Activated CD4-positive, alpha-beta T cell treated with anti-CD3 and anti-CD28 coated beads for 36 hours (primary cell): ENCODE measurements at regions of chr17 and their contacts with region 1.

Region 1: DNA sequence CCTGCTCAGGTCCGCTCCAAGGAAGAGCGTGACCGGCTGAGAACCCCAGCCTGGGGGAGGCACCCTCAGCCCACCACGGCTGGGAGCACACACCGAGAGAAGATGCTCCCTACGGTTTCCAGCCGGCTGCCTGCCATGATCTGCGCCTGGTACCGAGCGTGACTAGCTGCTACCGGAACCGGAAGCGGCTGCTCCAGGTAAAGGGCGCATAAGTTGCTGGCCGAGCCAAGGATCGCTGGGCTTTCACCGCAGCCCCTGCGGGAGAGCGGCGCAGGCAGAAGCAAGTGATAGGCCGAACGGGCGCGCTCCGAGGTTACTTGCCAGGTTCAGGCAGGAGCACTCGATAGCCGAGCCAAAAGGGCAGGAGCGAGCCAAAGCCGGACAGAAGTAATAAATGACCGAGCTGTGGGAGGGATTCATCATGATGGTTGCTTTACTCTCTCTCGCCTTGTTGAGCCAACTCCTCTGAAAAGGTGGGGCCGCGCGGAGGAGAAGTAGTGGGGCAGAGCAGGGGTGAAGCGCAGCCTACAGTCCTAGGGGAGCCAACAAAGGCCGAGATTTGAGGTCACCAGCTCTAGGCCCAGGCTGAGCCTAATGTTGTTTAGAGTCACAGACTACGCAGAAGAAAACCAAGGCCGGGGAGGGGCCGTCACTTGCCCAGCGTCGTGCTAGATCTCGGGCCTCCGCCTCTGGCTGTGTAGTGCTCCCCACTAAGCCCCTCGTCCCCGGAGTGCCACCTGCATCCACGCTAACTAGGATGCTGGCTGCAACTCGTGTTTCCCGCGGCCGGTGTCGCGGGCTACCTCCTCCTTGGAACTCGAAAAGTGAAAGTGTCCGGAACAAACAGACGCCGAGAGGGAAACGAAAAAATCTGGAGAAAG is at the start of gene MRPS23:
- DNase-seq: peak; percentile 99
- ATAC-seq: peak; percentile 91
- H3K4me3 Mint-ChIP-seq: peak within 1 kb of the TSS; percentile 98
- H3K27ac Mint-ChIP-seq: peak within 1 kb of the TSS; percentile 95
- H3K4me1 Mint-ChIP-seq: peaks cover 30% of the 10 kb centered on the region
- H3K27me3 Mint-ChIP-seq: no peaks in the 10 kb centered on the region
- total RNA-seq, gene MRPS23: 42.6 to 69.7 TPM

Region 2: GRCh38 chr17:56833809-56834379 is 1016.2 kb before region 1 on chr17 and contains the starts of genes C17orf67 and DGKE:
- CTCF ChIA-PET with region 1: interaction called, 4 read pairs
- POLR2A ChIA-PET with region 1: no interaction called
- intact Hi-C with region 1: loop called in 1 of 2 experiments (anchors 5 kb)
- DNase-seq: peak; percentile 100
- ATAC-seq: peak; percentile 93
- H3K4me3 Mint-ChIP-seq: peak within 1 kb of the TSS; percentile 86
- H3K27ac Mint-ChIP-seq: peak within 1 kb of the TSS; percentile 90
- H3K4me1 Mint-ChIP-seq: peaks cover 62% of the 10 kb centered on the region
- H3K27me3 Mint-ChIP-seq: no peaks in the 10 kb centered on the region
- total RNA-seq, gene C17orf67: 4.0 to 5.0 TPM
- total RNA-seq, gene DGKE: 22.4 to 27.4 TPM

Region 3: DNA sequence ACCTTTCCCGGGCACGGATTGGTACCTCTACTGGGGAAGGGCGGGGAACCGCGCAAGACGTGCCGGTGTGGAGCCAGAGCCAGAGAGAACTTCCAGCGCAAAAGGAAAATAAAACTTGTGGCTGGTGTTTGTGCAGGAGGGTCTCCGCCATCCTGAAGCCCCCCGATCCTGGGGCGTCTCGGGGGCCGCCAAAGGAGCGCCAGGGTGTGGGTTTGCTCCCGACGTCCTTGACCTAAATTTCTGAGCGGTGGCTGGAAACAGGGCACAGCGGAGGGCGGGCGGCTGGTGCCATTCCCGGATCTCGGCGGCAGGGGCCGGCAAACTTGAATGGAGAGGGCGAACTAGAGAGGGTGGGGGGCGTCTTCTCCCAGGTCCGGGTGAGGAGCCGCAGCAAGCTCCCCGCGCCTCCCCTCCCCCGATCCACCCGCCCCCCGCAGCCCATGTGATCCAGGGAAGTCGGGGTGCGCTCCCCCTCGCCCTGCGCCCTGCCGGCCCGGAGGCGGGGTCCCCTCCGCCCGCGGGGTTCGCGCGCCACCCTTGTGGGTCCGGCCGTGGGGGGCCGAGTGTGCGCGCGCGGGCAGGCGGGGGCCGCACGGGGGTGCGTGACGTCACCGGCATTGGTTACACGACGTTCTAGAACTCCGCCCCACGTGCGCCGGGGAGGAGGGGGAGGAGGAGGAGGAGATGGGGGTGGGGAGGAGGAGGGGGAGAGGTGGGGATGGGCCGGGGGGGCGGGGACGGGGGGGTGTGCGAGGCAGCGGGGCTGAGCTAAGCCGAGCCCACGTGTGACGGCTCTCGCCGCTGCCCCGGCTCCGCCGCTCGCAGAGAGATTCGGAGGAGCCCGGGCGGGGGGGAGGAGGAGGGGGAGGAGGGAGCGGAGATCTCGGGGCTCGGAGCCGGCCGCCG is 594.1 kb before region 1 on chr17 and contains the start of gene MSI2:
- CTCF ChIA-PET with region 1: no interaction called
- POLR2A ChIA-PET with region 1: no interaction called
- intact Hi-C with region 1: loop called in 1 of 2 experiments (anchors 1 kb)
- DNase-seq: peak; percentile 93
- ATAC-seq: peak; percentile 75
- H3K4me3 Mint-ChIP-seq: peak within 1 kb of the TSS; percentile 80
- H3K27ac Mint-ChIP-seq: peak within 1 kb of the TSS; percentile 79
- H3K4me1 Mint-ChIP-seq: peaks cover 42% of the 10 kb centered on the region
- H3K27me3 Mint-ChIP-seq: no peaks in the 10 kb centered on the region
- total RNA-seq, gene MSI2: 55.3 to 57.2 TPM

Region 4: GRCh38 chr17:57541472-57542394 is 308.4 kb before region 1 on chr17:
- CTCF ChIA-PET with region 1: no interaction called
- POLR2A ChIA-PET with region 1: no interaction called
- intact Hi-C with region 1: no loop called
- DNase-seq: no peak
- ATAC-seq: no peak
- H3K4me3 Mint-ChIP-seq: no peak overlapping the region
- H3K27ac Mint-ChIP-seq: no peak overlapping the region
- H3K4me1 Mint-ChIP-seq: peaks cover 20% of the 10 kb centered on the region
- H3K27me3 Mint-ChIP-seq: no peaks in the 10 kb centered on the region

Region 5: DNA sequence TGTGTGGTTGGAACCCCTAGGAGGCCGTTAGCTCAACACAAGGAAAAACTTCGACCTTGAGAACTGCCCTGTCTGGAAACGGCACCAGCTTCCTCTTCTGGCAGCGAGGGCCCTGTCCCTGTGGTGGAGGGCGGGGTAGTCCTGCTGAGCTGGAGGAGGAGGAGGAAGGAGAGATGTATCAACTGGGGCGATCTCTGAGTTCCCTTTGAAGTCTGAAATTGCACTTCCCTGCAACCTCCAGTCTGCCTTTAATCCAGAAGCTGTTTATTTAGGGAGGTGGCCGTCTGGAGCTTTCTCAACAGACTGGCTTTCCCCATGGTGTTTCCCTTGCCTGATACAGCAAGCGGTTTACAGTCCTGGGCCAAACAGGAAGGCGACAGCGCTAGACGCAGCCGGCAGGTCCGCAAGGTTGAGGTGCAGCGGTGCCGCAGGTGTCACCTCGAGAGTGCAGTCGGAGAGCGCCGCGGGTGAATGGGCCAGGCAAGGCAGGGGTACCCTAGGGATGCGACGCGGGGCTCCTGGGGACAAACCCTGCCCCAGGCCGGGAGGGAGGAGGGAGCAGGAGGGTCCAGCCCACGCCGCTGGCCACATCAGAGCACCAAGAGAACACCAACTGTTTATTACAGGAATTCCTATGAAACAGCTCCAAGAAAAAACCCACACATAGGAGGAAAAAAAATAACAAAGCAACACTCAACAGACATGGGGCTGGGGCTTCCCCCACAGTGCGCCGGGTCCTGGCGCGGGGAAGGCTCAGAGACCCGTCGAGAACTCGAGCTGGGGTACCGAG is 11.1 kb after region 1 on chr17:
- CTCF ChIA-PET with region 1: interaction called, 33 read pairs
- POLR2A ChIA-PET with region 1: no interaction called
- intact Hi-C with region 1: no loop called
- DNase-seq: peak; percentile 55
- ATAC-seq: peak; percentile 73
- H3K4me3 Mint-ChIP-seq: peak overlapping the region; percentile 60
- H3K27ac Mint-ChIP-seq: no peak overlapping the region
- H3K4me1 Mint-ChIP-seq: peaks cover 9% of the 10 kb centered on the region
- H3K27me3 Mint-ChIP-seq: peaks cover 13% of the 10 kb centered on the region

Region 6: DNA sequence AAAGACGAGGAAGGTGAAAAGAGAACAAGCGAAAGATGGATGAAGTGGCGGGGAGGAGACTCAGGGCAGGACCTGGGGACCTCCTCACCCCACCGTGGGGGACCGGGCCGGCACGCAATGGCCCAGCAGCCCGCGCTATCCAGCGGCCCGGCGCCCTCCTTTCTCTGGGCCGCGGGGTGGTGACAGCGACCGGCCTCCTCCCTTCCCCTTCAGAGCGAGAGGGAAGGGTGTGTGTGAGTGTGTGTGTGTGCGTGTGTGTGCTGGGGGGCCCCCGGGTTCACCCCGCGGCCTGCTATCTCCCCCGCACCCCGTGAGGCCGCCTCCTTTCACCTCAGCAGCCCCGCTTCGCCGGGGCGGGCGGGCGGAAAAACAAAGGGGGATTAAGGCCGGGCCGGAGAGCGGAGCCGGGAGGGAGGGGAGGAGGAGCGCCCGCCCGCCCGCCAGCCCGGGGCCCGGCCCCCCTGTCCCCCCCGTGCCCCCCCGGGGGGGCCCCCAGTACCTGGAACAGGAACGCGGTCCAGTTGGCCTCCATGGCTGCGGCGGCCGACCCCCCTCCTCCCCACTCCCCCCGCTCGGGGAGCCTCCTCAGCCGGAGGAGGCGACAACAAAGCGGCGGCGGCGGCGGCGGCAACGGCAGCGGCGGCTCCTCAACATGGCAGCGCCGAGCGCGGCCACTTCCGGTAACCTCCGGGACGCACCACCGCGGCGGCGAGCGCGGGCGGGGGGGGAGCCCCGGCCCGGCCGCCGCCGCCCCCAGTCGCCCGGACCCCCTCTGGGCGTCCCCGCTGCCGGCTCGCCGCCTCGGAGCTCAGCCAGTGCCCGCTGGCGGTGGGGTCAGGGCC is 137.7 kb after region 1 on chr17 and contains the start of gene VEZF1:
- CTCF ChIA-PET with region 1: interaction called, 249 read pairs
- POLR2A ChIA-PET with region 1: interaction called, 4 read pairs
- intact Hi-C with region 1: loop called in 1 of 2 experiments (anchors 1 kb)
- DNase-seq: peak; percentile 88
- ATAC-seq: peak; percentile 68
- H3K4me3 Mint-ChIP-seq: peak within 1 kb of the TSS; percentile 89
- H3K27ac Mint-ChIP-seq: peak within 1 kb of the TSS; percentile 95
- H3K4me1 Mint-ChIP-seq: peaks cover 56% of the 10 kb centered on the region
- H3K27me3 Mint-ChIP-seq: no peaks in the 10 kb centered on the region
- total RNA-seq, gene VEZF1: 21.3 to 26.3 TPM

Region 7: GRCh38 chr17:58156839-58157803 is 307.0 kb after region 1 on chr17:
- CTCF ChIA-PET with region 1: no interaction called
- POLR2A ChIA-PET with region 1: no interaction called
- intact Hi-C with region 1: loop called in 1 of 2 experiments (anchors 2 kb)
- DNase-seq: peak; percentile 78
- ATAC-seq: peak; percentile 90
- H3K4me3 Mint-ChIP-seq: peak overlapping the region; percentile 83
- H3K27ac Mint-ChIP-seq: peak overlapping the region; percentile 84
- H3K4me1 Mint-ChIP-seq: peaks cover 47% of the 10 kb centered on the region
- H3K27me3 Mint-ChIP-seq: no peaks in the 10 kb centered on the region

Region 8: GRCh38 chr17:58337600-58338453 is 487.7 kb after region 1 on chr17:
- CTCF ChIA-PET with region 1: no interaction called
- POLR2A ChIA-PET with region 1: no interaction called
- intact Hi-C with region 1: loop called in 1 of 2 experiments (anchors 10 kb)
- DNase-seq: peak; percentile 97
- ATAC-seq: peak; percentile 57
- H3K4me3 Mint-ChIP-seq: peak overlapping the region; percentile 100
- H3K27ac Mint-ChIP-seq: peak overlapping the region; percentile 99
- H3K4me1 Mint-ChIP-seq: peaks cover 26% of the 10 kb centered on the region
- H3K27me3 Mint-ChIP-seq: no peaks in the 10 kb centered on the region